ENCODE measurements at regions of chr9 and their contacts with region 1.

Region 1: GRCh38 chr9:25964239-25964638 is 286.0 kb upstream of the TUSC1 start:
- DNase-seq: peak; percentile 47
- ATAC-seq: peak; percentile 67
- H3K4me3 ChIP-seq: no peak overlapping the region
- H3K27ac ChIP-seq: no peak overlapping the region
- H3K4me1 ChIP-seq: no peaks in the 10 kb centered on the region
- H3K27me3 ChIP-seq: no peaks in the 10 kb centered on the region
- CTCF ChIP-seq: peak; percentile 46
- EP300 ChIP-seq: no peak
- POLR2A ChIP-seq: no peak
- RAD21 ChIP-seq: 0 out of 2 replicates have a peak, but pooled peaks have one; percentile 15

Region 2: DNA sequence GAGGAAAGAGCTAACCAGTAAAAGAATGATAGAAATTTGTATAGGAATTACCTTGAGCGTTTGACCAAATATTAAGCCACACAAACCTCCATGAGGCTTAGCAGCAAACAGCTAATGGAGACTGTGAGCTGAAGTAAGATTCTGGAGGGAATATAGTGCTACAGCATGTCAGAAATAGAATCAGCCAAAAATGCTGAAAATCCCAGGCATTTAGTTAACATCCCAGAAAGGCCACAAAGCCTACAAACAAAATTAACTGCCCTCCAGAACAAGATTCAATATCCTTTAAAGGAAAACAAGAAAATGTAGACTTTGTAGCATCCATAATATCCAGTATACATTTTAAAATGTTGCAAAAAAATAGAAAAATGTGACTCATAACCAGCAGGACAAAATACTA is 28.2 kb before region 1 on chr9:
- CTCF ChIA-PET with region 1: no interaction called
- POLR2A ChIA-PET with region 1: no interaction called
- in situ Hi-C with region 1: no loop called
- intact Hi-C with region 1: no loop called
- DNase-seq: no peak
- ATAC-seq: no peak
- H3K4me3 ChIP-seq: no peak overlapping the region
- H3K27ac ChIP-seq: no peak overlapping the region
- H3K4me1 ChIP-seq: no peaks in the 10 kb centered on the region
- H3K27me3 ChIP-seq: no peaks in the 10 kb centered on the region
- CTCF ChIP-seq: no peak
- EP300 ChIP-seq: no peak
- POLR2A ChIP-seq: no peak
- RAD21 ChIP-seq: no peak

Region 3: DNA sequence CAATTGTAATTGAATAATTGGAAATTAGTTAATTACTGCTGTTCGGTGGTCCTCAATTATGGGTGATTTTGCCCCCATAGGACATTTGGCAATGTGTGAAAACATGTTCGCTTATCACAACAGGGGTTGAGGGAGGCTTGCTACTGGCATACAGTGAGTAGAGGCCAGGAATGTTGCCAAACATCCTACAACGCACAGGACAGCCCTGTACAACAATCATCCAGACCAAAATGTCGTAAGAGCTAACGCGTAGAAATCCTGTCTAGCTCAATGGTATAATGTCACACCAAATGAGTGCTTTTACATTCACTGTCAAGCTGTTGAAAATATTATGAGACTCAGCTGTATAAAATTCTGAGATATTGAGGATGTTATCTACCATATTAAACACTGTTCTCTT is 178.4 kb after region 1 on chr9:
- CTCF ChIA-PET with region 1: no interaction called
- POLR2A ChIA-PET with region 1: no interaction called
- in situ Hi-C with region 1: no loop called
- intact Hi-C with region 1: no loop called
- DNase-seq: no peak
- ATAC-seq: no peak
- H3K4me3 ChIP-seq: no peak overlapping the region
- H3K27ac ChIP-seq: no peak overlapping the region
- H3K4me1 ChIP-seq: no peaks in the 10 kb centered on the region
- H3K27me3 ChIP-seq: no peaks in the 10 kb centered on the region
- CTCF ChIP-seq: no peak
- EP300 ChIP-seq: no peak
- POLR2A ChIP-seq: no peak
- RAD21 ChIP-seq: no peak

Region 4: DNA sequence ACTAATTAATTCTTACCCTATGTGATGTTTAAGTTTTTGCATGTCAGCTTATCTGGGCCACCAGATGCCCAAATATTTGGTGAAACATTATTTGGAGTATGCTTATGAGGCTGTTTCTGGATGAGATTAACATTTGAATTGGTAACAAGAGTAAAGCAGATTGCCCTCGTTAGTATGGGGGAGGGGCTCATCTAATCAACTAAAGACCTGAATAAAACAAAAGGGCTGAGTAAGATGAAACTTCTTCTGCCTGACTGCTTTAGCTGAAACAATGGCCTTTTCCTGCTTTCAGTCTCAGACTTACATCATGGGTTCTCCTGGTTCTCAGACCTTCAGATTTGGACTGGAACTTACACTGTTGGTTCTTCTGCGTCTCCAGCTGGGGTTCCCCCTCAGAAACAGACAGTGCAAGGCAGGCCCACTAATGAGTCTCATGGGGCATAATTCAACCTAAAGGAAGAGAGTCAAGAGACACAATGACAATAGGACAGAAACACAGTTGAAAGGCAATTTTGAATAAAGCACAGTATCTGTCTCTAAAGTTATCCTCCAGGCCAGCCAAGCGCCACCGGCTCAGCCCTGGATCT is 639.9 kb after region 1 on chr9:
- CTCF ChIA-PET with region 1: no interaction called
- POLR2A ChIA-PET with region 1: no interaction called
- in situ Hi-C with region 1: loop called (anchors 25 kb)
- intact Hi-C with region 1: no loop called
- DNase-seq: no peak
- ATAC-seq: no peak
- H3K4me3 ChIP-seq: no peak overlapping the region
- H3K27ac ChIP-seq: no peak overlapping the region
- H3K4me1 ChIP-seq: no peaks in the 10 kb centered on the region
- H3K27me3 ChIP-seq: no peaks in the 10 kb centered on the region
- CTCF ChIP-seq: no peak
- EP300 ChIP-seq: no peak
- POLR2A ChIP-seq: no peak
- RAD21 ChIP-seq: no peak

Measured in HepG2 (cell line).